T-cell (primary cell): ENCODE measurements at regions of chr11 and their contacts with region 1.

Region 1: DNA sequence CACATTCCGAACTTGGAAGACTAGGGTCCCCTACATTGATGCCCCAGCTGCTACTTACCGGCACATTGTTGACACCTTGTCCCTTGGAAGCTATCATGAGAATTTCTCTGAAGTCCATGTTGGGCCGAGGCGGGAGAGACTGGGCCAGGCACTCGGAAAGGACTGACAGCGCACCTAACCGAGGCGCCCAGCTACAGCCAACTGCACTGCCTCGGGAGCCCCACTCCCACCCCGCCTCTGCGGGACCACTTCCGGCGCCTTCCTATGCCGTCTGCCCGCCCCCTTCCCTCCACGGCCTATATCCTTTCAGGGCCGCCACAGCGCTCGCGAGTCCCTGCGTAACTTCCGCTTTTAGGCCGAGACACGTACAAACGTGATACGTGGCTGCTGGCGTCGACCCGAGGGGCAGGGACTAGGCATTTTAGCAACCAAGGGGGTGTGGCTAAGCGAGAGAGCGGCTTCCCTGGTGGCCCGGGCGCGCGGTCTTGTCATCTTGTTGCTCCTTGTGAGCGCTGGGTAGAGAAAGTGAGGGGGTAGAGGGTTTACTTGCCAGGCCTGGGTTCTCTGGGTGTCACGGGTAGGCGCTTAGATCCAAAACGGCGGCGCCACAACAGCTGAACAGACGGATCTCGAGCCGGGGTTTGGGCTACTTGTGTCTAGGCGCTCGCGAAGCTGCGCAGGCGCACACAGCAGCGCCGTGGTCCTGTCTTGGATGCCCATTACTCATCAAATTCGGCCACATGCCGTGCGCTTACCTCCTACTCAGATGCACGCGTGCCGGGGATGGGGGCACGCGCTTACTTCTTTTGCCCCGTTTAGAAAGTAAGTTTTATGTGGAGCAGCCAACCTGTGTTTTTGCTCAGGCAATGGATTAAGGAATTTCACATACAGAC is at the start of gene SPTY2D1:
- DNase-seq: peak; percentile 91 to 99 (median 99)
- ATAC-seq: peak; percentile 96 to 99 (median 98)
- H3K4me3 ChIP-seq: peak within 1 kb of the TSS; percentile 68 to 100
- H3K4me3 Mint-ChIP-seq: peak within 1 kb of the TSS; percentile 88 to 97 (median 93)
- H3K27ac ChIP-seq: peak within 1 kb of the TSS; percentile 94
- H3K27ac Mint-ChIP-seq: peak within 1 kb of the TSS; percentile 99 to 100
- H3K4me1 ChIP-seq: peaks cover 9 to 21% of the 10 kb centered on the region in 2 experiments
- H3K4me1 Mint-ChIP-seq: peaks cover 27 to 35% (median 34%) of the 10 kb centered on the region in 3 donors
- H3K27me3 ChIP-seq: no peaks in the 10 kb centered on the region
- H3K27me3 Mint-ChIP-seq: peaks cover 0 to 4% of the 10 kb centered on the region in 2 donors
- total RNA-seq, gene SPTY2D1: 18.2 to 46.2 (median 22.2) TPM

Region 2: GRCh38 chr11:18608376-18608775 is 26.0 kb before region 1 on chr11:
- CTCF ChIA-PET with region 1: interaction called, 4 to 5 read pairs
- POLR2A ChIA-PET with region 1: interaction called, 3 to 11 read pairs
- DNase-seq: no peak
- ATAC-seq: no peak
- H3K4me3 ChIP-seq: no peak overlapping the region
- H3K4me3 Mint-ChIP-seq: no peak overlapping the region
- H3K27ac ChIP-seq: no peak overlapping the region
- H3K27ac Mint-ChIP-seq: no peak overlapping the region
- H3K4me1 ChIP-seq: no peaks in the 10 kb centered on the region
- H3K4me1 Mint-ChIP-seq: peaks cover 0 to 2% (median 0%) of the 10 kb centered on the region in 3 donors
- H3K27me3 ChIP-seq: no peaks in the 10 kb centered on the region
- H3K27me3 Mint-ChIP-seq: no peaks in the 10 kb centered on the region

Region 3: GRCh38 chr11:18721561-18722292 is 87.3 kb after region 1 on chr11:
- CTCF ChIA-PET with region 1: interaction called, 6 to 10 read pairs
- POLR2A ChIA-PET with region 1: no interaction called
- DNase-seq: peak in 22 of 35 experiments; percentile 7 to 75 (median 32)
- ATAC-seq: peak; percentile 60 to 66 (median 64)
- H3K4me3 ChIP-seq: peak overlapping the region; percentile 77 to 89
- H3K4me3 Mint-ChIP-seq: peak overlapping the region; percentile 80 to 92 (median 89)
- H3K27ac ChIP-seq: peak overlapping the region; percentile 0
- H3K27ac Mint-ChIP-seq: peak overlapping the region; percentile 31 to 68
- H3K4me1 ChIP-seq: peaks cover 0 to 20% of the 10 kb centered on the region in 2 experiments
- H3K4me1 Mint-ChIP-seq: peaks cover 5 to 9% (median 6%) of the 10 kb centered on the region in 3 donors
- H3K27me3 ChIP-seq: peaks cover 0 to 3% of the 10 kb centered on the region in 2 experiments
- H3K27me3 Mint-ChIP-seq: peaks cover 0 to 4% of the 10 kb centered on the region in 2 donors

Region 4: GRCh38 chr11:20467487-20468185 is 1833.2 kb after region 1 on chr11:
- CTCF ChIA-PET with region 1: no interaction called
- POLR2A ChIA-PET with region 1: no interaction called
- DNase-seq: no peak
- ATAC-seq: no peak
- H3K4me3 ChIP-seq: no peak overlapping the region
- H3K4me3 Mint-ChIP-seq: no peak overlapping the region
- H3K27ac ChIP-seq: no peak overlapping the region
- H3K27ac Mint-ChIP-seq: no peak overlapping the region
- H3K4me1 ChIP-seq: no peaks in the 10 kb centered on the region
- H3K4me1 Mint-ChIP-seq: peaks cover 5 to 12% (median 7%) of the 10 kb centered on the region in 3 donors
- H3K27me3 ChIP-seq: no peaks in the 10 kb centered on the region
- H3K27me3 Mint-ChIP-seq: no peaks in the 10 kb centered on the region